ENCODE measurements at regions of chr9 and their contacts with region 1.

Region 1: DNA sequence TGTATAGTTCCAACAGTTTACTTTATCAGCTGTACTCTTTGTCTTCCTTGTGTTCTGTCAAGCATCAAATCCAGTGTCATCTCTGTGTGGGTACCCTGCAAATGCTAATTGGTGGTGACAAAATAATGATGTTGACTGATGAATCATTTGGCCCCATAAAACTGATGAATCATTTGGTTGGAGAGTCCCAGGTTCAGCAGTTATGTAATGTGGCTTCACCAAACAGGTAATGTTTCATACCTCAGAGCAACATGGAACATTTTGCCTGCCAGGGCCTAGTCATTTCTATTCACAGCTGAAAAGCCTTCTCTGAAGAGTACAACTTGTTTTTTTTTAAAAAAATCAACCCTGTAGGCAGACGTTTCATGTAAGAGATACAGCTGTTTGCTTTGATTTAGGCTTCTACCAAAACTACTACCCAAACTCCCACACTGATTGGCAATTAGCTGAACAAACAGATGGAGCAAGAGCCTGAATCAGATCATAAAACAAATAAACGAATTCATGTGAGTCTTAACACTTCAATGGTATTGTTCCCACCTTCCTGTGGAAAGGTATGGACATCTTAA is 23.6 kb upstream of the CTSV start:
- DNase-seq: peak; percentile 82
- H3K4me3 Mint-ChIP-seq: no peak overlapping the region
- H3K27ac Mint-ChIP-seq: peak overlapping the region; percentile 85
- H3K4me1 Mint-ChIP-seq: peaks cover 15% of the 10 kb centered on the region
- H3K27me3 Mint-ChIP-seq: peaks cover 7% of the 10 kb centered on the region

Region 2: GRCh38 chr9:96777426-96777864 is 285.1 kb before region 1 on chr9:
- CTCF ChIA-PET with region 1: no interaction called
- intact Hi-C with region 1: loop called (anchors 1 kb)
- DNase-seq: no peak
- H3K4me3 Mint-ChIP-seq: peak overlapping the region; percentile 100
- H3K27ac Mint-ChIP-seq: peak overlapping the region; percentile 96
- H3K4me1 Mint-ChIP-seq: peaks cover 32% of the 10 kb centered on the region
- H3K27me3 Mint-ChIP-seq: no peaks in the 10 kb centered on the region

Region 3: GRCh38 chr9:96875461-96876364 is 186.8 kb before region 1 on chr9:
- CTCF ChIA-PET with region 1: no interaction called
- intact Hi-C with region 1: loop called (anchors 1 kb)
- DNase-seq: peak; percentile 63
- H3K4me3 Mint-ChIP-seq: peak overlapping the region; percentile 77
- H3K27ac Mint-ChIP-seq: peak overlapping the region; percentile 77
- H3K4me1 Mint-ChIP-seq: peaks cover 25% of the 10 kb centered on the region
- H3K27me3 Mint-ChIP-seq: peaks cover 42% of the 10 kb centered on the region

Region 4: DNA sequence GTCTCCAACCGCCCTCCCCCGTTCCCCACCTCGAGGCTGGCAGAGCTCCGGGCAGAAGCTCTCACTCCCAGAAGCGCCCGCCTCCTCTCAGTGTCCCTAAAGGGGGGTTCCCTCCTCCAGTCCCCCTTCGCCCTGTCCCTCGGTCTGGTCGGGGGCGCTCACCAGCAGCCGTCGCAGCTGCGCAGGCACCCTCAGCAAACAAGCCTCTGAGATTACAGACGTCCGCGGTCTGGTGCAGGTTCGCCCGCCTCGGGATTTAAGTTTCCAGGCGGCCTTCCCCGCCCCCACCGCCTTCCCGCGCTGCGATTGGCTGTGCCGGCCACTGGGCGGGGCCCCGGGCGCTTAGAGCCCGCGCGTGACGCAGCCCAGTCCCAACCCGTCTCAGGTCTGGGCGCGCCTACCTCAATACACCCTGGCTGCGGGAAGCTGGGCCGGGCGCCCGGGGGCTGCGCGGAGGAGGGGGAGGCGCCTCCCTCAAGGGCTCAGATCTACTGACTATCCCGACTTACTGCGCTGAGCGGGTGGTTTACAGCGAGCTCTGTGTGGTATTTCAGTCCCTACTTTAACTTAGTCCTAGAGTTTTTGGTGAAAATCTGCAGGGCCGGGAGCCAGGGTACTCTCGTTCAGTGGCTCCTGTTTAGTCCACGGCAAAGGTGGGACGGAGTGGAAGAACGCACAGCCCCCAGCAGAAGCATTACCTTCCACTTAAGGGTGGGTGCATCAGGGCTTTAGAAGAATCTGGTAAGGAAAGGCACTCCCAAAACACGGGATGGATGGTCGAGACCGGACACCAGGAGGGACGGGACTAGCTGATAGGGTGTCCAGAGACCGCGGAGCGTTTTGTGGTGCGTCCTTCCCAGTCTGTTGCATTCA is 23.4 kb before region 1 on chr9 and contains the start of gene CTSV:
- CTCF ChIA-PET with region 1: no interaction called
- intact Hi-C with region 1: loop called (anchors 1 kb)
- DNase-seq: peak; percentile 84
- H3K4me3 Mint-ChIP-seq: peak within 1 kb of the TSS; percentile 85
- H3K27ac Mint-ChIP-seq: no peak within 1 kb of the TSS
- H3K4me1 Mint-ChIP-seq: peaks cover 2% of the 10 kb centered on the region
- H3K27me3 Mint-ChIP-seq: peaks cover 48% of the 10 kb centered on the region
- total RNA-seq, gene CTSV: 0.95 to 1.2 TPM

Region 5: DNA sequence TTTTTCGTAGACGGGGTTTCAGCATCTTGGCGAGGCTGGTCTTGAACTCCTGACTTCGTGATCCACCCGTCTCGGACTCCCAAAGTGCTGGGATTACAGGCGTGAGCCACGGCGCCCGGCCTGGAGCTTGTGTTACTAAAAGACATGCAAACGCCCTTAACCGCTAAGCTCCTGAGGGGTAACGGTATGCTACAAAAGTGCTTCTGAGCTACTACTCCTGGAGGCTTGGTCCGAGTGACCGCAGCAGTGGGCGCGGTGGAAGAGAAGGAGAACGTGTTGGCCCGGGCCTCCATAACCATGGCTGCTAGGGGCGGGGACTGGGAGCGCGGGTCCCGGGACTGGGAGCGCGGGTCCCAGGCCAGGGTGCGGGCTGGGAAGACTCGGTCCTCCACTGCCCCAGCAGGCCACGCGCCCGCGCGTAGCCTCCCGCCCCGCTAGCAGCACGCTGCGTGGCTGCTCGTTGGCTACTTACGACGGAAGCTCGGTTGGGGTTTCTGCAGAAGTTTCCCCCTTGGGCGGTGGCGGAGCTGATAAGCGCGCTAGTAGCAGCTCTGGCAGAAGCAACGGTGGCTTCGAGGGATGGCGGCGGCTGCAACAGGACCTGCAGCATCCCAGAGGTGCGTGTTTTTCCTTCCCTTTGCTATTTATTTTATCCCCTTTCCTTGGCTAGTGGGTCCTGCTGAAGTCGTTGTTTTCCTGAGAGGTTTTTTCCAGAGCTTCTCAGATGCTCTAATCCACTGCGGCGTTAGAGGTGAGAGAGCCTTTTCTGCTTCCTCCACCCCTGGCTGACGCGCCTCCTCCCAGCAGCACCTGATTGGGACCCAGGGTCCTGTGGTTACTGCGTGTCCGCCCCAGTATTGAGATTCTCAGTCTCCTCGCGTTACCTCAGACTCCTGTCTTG is 175.7 kb after region 1 on chr9:
- CTCF ChIA-PET with region 1: no interaction called
- intact Hi-C with region 1: no loop called
- DNase-seq: peak; percentile 88
- H3K4me3 Mint-ChIP-seq: peak overlapping the region; percentile 88
- H3K27ac Mint-ChIP-seq: peak overlapping the region; percentile 81
- H3K4me1 Mint-ChIP-seq: peaks cover 14% of the 10 kb centered on the region
- H3K27me3 Mint-ChIP-seq: no peaks in the 10 kb centered on the region

Region 6: DNA sequence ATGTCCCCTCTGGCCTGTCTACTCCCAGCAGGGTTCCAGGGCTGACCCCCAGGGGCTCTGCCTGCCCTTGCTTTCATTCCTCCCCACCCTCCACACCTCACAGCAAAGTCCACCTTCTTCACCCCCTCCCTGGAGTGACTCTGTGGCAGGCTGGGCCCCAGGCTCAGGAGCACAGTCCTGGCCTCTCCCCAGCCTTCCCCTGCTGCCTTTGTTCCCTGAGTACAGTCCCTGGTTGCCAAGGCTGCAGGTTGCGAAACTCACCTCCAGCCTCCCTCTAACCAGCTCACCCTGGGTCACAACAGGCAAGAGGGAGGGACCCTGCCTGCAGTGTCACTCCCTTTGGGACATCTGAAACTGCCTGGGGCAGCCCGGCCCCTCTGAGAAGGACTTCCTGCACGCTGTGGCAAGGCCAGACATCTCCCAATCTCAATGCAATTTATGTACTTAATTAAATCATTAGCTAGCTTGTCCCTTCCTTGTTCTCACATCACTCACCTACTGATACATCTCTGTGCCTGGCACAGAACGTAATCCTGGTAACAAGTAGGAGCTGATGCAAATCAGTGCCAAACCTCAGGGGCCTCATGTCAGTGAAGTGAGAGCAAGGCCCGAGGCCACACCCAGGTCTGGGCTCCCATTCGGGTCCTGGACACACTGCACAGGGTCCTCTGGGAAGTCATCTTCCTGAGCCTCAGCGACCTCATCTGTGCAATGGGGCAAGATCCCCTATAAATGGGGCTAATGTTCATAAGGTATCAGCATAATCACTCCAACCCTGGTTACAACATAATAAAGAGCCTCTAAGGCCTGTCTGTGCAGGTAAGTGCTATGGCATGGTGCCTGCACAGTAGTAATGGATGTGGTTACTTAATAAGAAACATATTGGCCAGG is 1083.8 kb after region 1 on chr9:
- CTCF ChIA-PET with region 1: no interaction called
- intact Hi-C with region 1: no loop called
- DNase-seq: no peak
- H3K4me3 Mint-ChIP-seq: no peak overlapping the region
- H3K27ac Mint-ChIP-seq: no peak overlapping the region
- H3K4me1 Mint-ChIP-seq: peaks cover 1% of the 10 kb centered on the region
- H3K27me3 Mint-ChIP-seq: no peaks in the 10 kb centered on the region

Measured in activated naive CD4-positive, alpha-beta T cell treated with anti-CD3 and anti-CD28 coated beads for 36 hours (primary cell).